Astrocyte of the cerebellum (primary cell): ENCODE measurements at regions of chr7 and their contacts with region 1.

Region 1: DNA sequence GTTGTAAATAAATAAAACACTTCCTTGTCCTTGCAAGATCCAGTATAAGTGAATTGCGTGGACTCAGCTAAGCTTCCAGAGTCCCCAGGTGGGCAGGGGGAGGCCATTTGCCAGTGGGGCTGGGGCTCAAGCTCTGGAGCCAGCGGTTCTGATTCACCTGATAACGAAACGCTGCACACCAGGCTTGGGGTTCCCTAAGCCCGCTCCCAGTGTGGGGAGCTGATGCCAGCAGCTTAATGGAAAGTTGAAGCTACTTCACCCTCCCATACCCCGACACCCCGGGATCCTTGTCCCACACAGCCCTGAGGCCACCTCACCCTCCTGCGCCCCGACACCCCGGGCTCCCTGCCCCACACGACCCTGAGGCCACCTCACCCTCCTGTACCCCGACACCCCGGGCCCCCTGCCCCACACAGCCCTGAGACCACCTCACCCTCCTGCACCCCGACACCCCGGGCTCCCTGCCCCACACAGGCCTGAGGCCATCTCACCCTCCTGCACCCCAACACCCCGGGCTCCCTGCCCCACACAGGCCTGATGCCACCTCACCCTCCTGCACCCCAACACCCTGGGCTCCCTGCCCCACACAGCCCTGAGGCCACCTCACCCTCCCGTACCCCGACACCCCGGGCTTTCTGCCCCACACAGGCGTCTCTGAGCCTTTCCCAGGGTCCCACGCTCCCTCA is 30.8 kb downstream of the FKBP6 start:
- DNase-seq: no peak
- H3K4me3 ChIP-seq: no peak overlapping the region
- CTCF ChIP-seq: no peak

Region 2: GRCh38 chr7:73463966-73464365 is 105.2 kb after region 1 on chr7:
- in situ Hi-C with region 1: loop called (anchors 5 kb)
- DNase-seq: no peak
- H3K4me3 ChIP-seq: no peak overlapping the region
- CTCF ChIP-seq: no peak